Cardiac septum (tissue), 1 donor: ENCODE measurements at regions of chr20 and their contacts with region 1.

Region 1: DNA sequence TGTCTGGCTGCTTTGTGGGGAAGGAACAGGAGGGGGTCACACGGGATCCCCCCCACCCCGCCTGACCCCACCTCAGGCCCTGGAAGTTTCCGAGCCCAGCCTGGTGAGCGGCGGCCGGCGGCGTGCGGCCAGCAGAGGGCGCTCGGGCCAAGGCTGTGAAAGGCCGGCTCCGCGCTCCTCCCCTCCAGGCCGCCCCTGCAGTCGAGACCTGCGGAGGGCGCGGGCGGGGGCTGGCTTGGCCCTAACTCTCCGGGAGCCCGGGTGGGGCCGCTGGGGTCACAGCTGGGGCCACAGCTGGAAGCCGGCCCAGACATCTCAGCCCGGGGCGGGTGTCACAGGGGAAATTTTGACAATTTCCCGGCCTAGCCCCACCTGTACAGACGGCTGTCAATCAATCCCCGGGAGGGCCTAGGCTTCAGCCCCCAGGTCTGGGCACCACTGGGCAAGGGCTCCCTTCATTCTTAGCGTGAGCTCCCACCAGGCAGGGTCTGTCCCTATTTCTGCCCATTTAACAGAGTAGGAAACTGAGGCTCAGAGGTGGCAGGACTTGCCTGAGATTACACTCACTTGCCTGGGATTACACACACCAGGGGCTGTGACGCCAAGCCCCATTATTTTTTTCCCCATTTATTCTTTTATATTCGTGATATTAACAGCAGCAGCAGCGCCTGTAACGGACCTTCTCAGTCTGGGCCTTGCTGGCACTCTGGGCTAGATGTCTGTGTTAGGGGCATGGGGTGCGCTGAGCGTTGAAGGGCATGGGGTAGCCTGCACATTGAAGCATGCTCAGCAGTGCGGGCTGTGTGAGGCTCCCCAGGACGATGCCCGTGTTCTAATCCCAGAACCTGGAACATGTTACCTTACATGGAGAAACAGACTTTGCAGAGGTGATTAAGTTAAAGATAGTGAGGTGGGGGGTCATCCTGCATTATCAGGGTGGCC is 23.0 kb downstream of the ZBP1 start:
- DNase-seq: peak; percentile 88

Region 2: DNA sequence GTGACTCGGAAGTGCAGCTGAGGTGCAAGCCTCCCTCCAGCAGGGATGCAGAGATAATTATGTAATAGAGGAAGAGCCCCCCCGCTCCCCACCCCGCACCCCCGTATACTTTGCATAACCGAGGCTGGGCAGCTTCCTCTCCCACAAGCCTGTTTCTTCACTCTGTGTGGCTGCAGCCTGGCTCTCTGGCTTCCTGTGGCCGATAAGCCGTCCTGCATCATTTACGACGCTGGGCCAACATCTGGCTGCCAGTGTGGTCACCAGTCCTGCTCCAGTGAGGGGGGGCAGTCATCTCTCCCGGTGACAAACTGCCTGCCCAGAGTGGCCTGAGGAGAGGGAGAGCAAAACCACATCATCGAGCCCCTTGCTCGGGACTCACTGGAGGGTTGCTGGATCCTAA is 146.8 kb before region 1 on chr20:
- intact Hi-C with region 1: no loop called
- DNase-seq: peak; percentile 90

Region 3: DNA sequence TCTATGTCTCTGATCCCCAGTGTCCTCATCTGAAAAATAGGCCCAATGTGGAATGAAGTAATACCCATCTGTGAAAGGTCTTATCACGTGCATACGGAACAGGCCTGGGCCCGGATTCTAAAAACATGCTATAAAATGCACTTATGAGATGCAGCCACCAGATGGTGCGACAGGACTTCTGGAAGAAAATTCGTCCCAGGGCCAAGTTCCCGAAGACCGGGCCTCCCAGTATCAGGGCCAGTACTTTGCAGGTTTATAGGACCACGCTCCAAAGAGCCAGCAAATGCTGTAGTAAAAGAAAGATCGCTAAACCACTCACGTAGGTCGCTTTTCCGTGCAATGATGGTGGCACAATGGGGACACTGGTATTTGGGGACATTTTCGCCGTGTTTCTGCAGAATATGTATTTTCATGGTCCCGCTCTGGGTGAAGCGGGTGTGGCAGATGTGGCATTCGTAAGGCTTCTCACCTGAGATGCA is 83.0 kb before region 1 on chr20:
- intact Hi-C with region 1: loop called (anchors 2 kb)
- DNase-seq: peak; percentile 77

Region 4: DNA sequence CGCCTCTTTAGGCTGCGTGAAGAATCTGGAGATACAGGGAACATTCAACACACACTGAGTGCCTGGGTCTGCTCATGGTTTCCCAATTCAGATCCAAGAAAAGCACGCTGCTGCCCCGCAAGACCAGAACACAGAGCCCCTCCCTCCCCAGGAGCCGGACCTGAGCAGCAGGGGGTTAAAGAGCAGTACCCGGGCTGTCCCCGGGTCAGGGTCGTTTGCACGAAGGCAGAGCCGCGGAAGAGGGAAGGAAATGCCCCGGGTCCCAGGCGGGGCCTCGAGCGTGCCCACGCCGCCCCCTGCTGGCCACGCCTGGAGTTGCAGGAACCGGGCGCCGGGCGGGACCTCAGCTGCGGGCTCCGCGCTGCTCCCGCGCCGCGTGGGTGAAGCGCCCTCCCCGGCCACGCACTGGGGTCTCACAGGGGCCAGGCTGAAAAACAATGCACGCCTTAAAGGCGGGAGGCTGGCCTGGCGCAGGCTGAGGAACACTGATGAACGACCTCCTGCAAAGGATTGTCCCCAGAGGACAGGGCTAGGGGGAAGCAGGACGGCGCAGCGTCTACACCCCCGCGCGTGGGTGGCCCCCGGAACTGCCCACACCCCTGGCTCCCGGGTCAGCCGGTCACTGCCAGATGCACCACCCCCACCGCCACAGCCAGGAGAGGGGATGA is 582.3 kb after region 1 on chr20:
- intact Hi-C with region 1: loop called (anchors 1 kb)
- DNase-seq: peak; percentile 78

Region 5: GRCh38 chr20:58209652-58210397 is 612.6 kb after region 1 on chr20:
- intact Hi-C with region 1: loop called (anchors 2 kb)
- DNase-seq: peak; percentile 94